ENCODE measurements at regions of chr17 and their contacts with region 1.

Region 1: DNA sequence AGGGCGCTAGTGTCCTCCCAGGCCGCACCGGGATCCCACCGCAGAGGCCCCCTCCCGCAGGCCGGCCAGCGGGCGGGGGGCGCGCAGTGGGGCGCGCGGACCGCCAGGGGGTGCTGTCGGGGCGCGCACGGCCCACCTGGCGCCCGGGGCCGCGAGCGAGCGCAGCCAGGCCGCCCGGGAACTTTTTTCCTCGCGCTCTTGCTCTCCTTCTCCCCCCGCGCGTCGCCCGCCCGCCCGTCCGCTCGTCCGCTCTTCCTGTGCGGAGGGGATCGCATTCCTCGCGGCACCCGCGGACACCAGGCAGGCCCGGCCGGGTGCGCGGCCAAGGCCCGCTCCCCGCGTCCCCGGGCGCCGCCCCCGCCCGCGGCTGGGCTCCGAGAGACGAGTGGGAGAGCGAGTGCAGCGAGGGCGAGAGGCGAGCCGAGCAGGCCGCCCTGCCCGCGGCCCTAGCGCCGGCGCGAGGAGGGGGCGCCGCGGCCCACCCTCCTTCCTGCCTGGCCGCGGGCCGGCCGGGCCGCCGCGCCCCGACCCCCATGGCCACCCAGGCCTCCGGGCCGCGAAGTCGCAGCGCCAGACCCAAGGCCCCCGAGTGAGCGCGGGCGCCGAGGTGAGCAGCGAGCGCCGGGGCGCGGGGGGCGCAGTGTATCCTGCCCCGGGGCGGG is at the start of gene RAI1:
- DNase-seq: peak; percentile 56 to 64
- ATAC-seq: peak; percentile 78 to 81
- H3K4me3 ChIP-seq: peak within 1 kb of the TSS; percentile 77 to 95 (median 85)
- H3K27ac ChIP-seq: peak within 1 kb of the TSS; percentile 58 to 87 (median 80)
- H3K4me1 ChIP-seq: peaks cover 18 to 26% of the 10 kb centered on the region in 2 donors
- H3K27me3 ChIP-seq: no peaks in the 10 kb centered on the region
- CTCF ChIP-seq: peak; percentile 50 to 98 (median 97)
- POLR2A ChIP-seq: peak; percentile 33 to 49
- total RNA-seq, gene RAI1: 2.1 to 6.7 (median 4.3) TPM

Region 2: GRCh38 chr17:17561408-17562145 is 119.7 kb before region 1 on chr17:
- in situ Hi-C with region 1: no loop called
- intact Hi-C with region 1: no loop called
- DNase-seq: peak; percentile 53 to 67
- ATAC-seq: peak; percentile 39 to 49
- H3K4me3 ChIP-seq: no peak overlapping the region
- H3K27ac ChIP-seq: peak overlapping the region; percentile 52 to 81 (median 70)
- H3K4me1 ChIP-seq: peaks cover 37 to 46% of the 10 kb centered on the region in 2 donors
- H3K27me3 ChIP-seq: no peaks in the 10 kb centered on the region
- CTCF ChIP-seq: no peak
- POLR2A ChIP-seq: no peak

Region 3: DNA sequence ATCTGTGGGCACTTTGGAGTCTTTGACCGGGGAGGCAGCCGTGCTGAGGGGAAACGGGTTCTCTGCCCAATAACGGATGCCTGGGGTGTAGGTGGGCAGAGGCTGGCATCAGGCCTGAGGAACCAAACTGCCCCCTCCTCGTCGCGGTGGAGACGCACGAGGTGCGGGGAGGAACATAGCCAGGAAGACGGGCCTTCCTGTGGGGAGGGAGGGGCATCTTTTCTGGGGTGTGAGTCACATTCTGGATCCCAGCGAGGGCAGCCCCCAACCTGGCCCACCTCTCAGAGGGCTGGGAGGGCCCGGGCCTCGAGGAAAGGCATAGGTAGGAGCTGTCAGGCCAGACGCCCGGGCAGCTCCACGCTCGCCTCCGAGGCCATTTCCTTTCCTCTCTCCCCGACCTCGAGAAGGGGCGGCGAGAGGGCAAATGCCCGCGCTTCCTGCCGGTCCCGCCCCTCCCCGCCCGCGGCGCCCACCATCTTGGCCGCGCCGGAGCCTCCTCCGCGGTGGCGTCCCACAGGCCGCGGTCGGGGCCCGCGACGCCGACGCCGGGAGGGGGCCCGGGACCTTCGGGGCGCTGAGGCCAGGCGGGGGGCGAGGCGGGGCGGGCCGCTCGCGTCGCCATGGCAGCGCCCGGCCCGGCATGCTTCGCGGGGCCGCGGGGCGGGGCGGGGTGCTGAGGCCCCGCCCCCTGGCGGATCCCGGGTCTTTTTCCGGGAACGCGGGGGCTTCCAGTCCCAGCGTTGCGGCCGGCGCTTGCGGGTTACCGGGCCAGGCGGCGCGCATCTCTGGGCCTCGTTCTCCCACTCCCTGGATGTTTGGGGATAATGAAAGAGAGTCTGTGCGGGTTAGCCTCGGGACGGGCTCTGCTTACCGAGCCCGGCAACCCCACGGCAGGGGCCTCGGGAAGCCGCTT is 13.1 kb after region 1 on chr17:
- in situ Hi-C with region 1: no loop called
- intact Hi-C with region 1: loop called (anchors 1 kb)
- DNase-seq: peak; percentile 41 to 63
- ATAC-seq: peak; percentile 76 to 77
- H3K4me3 ChIP-seq: peak overlapping the region; percentile 71 to 95 (median 88)
- H3K27ac ChIP-seq: peak overlapping the region; percentile 88 to 99 (median 96)
- H3K4me1 ChIP-seq: peaks cover 54 to 65% of the 10 kb centered on the region in 2 donors
- H3K27me3 ChIP-seq: no peaks in the 10 kb centered on the region
- CTCF ChIP-seq: no peak
- POLR2A ChIP-seq: peak; percentile 76 to 81

Region 4: DNA sequence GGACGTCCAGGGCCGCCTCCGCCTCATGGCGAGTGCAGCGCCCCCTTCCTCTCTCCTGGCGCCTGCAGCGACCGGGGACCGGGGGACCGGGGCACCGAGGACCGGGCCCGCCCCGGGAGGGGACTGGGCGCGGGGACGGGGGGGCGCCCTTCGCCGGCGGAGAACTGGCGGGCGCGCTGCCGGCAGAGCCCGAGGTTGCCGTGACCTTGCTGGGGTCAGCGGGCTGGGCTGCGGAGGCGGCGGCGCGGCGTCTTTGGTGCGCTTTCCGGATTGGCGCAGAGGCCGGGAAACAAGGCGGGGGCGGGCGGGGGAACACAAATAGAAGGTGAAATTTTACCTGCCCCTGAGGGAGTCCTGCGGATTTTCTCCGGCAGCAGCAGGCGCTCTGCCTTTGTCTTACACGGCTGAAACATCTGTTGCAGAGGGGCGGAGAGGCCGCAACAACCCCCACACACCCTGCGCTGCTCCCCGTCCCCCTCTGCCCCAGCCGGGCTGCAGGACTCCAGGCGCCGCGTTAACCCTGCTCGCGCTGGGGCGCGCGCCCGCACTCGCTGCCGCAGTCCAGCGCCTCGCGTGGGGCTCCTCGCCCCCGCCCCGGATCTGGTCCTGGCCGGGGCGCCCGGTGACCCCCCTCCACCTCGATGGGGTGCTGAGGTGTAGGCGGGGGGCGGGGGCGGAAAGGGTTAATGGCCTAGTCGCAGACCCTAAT is 102.0 kb after region 1 on chr17:
- in situ Hi-C with region 1: loop called in 1 of 4 experiments (anchors 25 kb)
- intact Hi-C with region 1: loop called (anchors 2 kb)
- DNase-seq: peak; percentile 74 to 90
- ATAC-seq: peak; percentile 61 to 67
- H3K4me3 ChIP-seq: peak overlapping the region; percentile 56 to 94 (median 62)
- H3K27ac ChIP-seq: peak overlapping the region; percentile 88 to 98 (median 93)
- H3K4me1 ChIP-seq: peaks cover 45 to 53% of the 10 kb centered on the region in 2 donors
- H3K27me3 ChIP-seq: no peaks in the 10 kb centered on the region
- CTCF ChIP-seq: peak in 2 of 5 experiments; percentile 11 to 20
- POLR2A ChIP-seq: peak; percentile 65 to 78

Region 5: GRCh38 chr17:17859909-17860765 is 178.8 kb after region 1 on chr17:
- in situ Hi-C with region 1: loop called (anchors 10 to 25 kb)
- intact Hi-C with region 1: loop called (anchors 1 kb)
- DNase-seq: peak in 1 of 2 donors; percentile 64
- ATAC-seq: peak; percentile 94 to 95
- H3K4me3 ChIP-seq: no peak overlapping the region
- H3K27ac ChIP-seq: peak overlapping the region in 3 of 4 donors; percentile 28 to 44 (median 38)
- H3K4me1 ChIP-seq: peaks cover 4 to 5% of the 10 kb centered on the region in 2 donors
- H3K27me3 ChIP-seq: no peaks in the 10 kb centered on the region
- CTCF ChIP-seq: peak; percentile 96 to 99 (median 98)
- POLR2A ChIP-seq: no peak

Region 6: DNA sequence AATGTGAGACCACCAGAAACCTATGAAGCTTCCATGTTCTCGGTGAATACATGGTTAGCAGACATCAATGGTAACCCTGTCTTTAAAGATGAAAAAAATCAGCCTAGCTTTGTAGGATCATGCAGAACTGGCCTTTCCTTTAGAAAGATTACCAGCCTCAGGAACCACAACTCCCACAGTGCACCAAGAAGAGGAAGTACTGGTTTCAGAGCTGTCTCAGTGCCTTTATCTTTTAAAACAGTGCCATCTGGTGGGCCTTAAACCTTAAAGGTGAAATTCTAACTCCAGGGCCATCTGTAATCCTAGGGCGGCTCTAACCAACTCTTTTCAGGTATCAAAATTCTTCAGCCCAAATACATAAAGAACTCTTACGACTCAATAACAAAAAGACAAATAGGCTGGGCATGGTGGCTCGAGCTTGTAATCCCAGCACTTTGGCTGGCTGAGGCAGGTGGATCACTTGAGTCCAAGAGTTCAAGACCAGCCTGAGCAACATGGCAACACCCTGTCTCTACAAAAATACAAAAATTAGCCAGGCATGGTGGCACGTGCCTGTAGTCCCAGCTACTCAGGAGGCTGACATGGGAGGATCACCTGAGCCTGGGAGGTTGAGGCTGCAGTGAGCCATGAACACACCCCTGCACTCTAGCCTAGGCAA is 352.3 kb after region 1 on chr17:
- in situ Hi-C with region 1: loop called (anchors 10 kb)
- intact Hi-C with region 1: loop called (anchors 2 kb)
- DNase-seq: peak; percentile 42 to 44
- ATAC-seq: peak; percentile 92 to 98
- H3K4me3 ChIP-seq: no peak overlapping the region
- H3K27ac ChIP-seq: peak overlapping the region; percentile 9 to 53 (median 45)
- H3K4me1 ChIP-seq: peaks cover 28 to 33% of the 10 kb centered on the region in 2 donors
- H3K27me3 ChIP-seq: no peaks in the 10 kb centered on the region
- CTCF ChIP-seq: peak; percentile 66 to 69 (median 67)
- POLR2A ChIP-seq: no peak

Measured in gastrocnemius medialis (tissue), 4 donors.